ENCODE measurements at regions of chr12 and their contacts with region 1.

Region 1: GRCh38 chr12:57904848-57905811 is 36.2 kb upstream of the ATP23 start:
- DNase-seq: peak; percentile 96
- H3K4me3 ChIP-seq: peak overlapping the region; percentile 12 to 37 (median 31)
- H3K27ac ChIP-seq: peak overlapping the region in 1 of 4 donors; percentile 38
- H3K4me1 ChIP-seq: peaks cover 5 to 9% (median 6%) of the 10 kb centered on the region in 4 donors
- H3K27me3 ChIP-seq: peaks cover 0 to 4% (median 0%) of the 10 kb centered on the region in 4 donors
- CTCF ChIP-seq: peak; percentile 100
- EP300 ChIP-seq: no peak
- POLR2A ChIP-seq: no peak

Region 2: GRCh38 chr12:57554897-57555296 is 350.2 kb before region 1 on chr12:
- intact Hi-C with region 1: no loop called
- DNase-seq: no peak
- H3K4me3 ChIP-seq: no peak overlapping the region
- H3K27ac ChIP-seq: no peak overlapping the region
- H3K4me1 ChIP-seq: peaks cover 4 to 9% (median 8%) of the 10 kb centered on the region in 4 donors
- H3K27me3 ChIP-seq: peaks cover 0 to 10% (median 2%) of the 10 kb centered on the region in 4 donors
- CTCF ChIP-seq: no peak
- EP300 ChIP-seq: no peak
- POLR2A ChIP-seq: no peak

Region 3: GRCh38 chr12:57782608-57783465 is 122.3 kb before region 1 on chr12 and contains the start of gene TSFM:
- intact Hi-C with region 1: loop called (anchors 1 kb)
- DNase-seq: peak; percentile 98
- H3K4me3 ChIP-seq: peak within 1 kb of the TSS; percentile 66 to 99 (median 92)
- H3K27ac ChIP-seq: peak within 1 kb of the TSS; percentile 74 to 82 (median 76)
- H3K4me1 ChIP-seq: peaks cover 14 to 29% (median 20%) of the 10 kb centered on the region in 4 donors
- H3K27me3 ChIP-seq: no peaks in the 10 kb centered on the region
- CTCF ChIP-seq: peak; percentile 98 to 99 (median 98)
- EP300 ChIP-seq: no peak
- POLR2A ChIP-seq: peak; percentile 42
- total RNA-seq, gene TSFM: 17.6 to 38.4 (median 29.2) TPM

Region 4: GRCh38 chr12:57803319-57803893 is 101.7 kb before region 1 on chr12:
- intact Hi-C with region 1: loop called (anchors 2 kb)
- DNase-seq: no peak
- H3K4me3 ChIP-seq: no peak overlapping the region
- H3K27ac ChIP-seq: peak overlapping the region in 3 of 4 donors; percentile 22 to 50 (median 43)
- H3K4me1 ChIP-seq: peaks cover 4 to 10% (median 5%) of the 10 kb centered on the region in 4 donors
- H3K27me3 ChIP-seq: no peaks in the 10 kb centered on the region
- CTCF ChIP-seq: peak; percentile 75 to 89 (median 86)
- EP300 ChIP-seq: no peak
- POLR2A ChIP-seq: no peak

Region 5: DNA sequence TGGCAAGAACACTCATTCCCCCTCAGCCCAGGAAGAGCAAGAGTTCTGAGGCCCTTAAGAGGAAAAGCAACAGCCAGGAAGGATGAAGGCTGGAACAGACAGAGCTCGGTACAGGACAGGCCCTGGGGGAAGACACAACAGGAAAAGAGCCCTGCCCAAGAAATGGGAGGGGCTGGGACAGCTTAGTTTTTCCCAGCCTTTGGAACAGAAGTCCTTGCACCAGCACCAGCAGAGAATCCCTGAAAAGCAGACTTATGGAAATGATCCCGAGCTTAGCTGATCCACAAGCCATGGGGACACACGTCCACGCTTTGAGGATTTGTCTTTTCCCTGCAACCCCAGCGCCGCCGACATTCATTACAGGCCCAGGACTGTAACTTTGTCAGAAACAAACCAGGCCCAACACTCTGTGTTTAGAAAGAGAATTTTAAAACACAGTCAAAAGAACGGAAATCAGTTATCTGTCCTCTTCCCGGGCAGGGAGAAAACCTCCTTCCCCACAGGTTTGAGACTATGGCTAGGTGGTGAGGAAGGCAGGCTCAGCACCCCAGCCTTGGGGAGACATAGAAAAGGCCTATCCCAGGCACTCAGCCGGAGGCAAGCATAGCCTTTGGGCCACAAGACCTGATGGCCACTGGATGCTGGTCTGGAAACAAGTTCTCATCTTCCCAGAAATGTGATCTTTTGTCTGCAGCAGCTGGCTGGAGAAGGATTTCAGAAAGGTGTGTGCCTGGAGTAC is 82.6 kb before region 1 on chr12:
- intact Hi-C with region 1: no loop called
- DNase-seq: no peak
- H3K4me3 ChIP-seq: no peak overlapping the region
- H3K27ac ChIP-seq: peak overlapping the region in 3 of 4 donors; percentile 18 to 54 (median 28)
- H3K4me1 ChIP-seq: peaks cover 39 to 85% (median 69%) of the 10 kb centered on the region in 4 donors
- H3K27me3 ChIP-seq: no peaks in the 10 kb centered on the region
- CTCF ChIP-seq: no peak
- EP300 ChIP-seq: no peak
- POLR2A ChIP-seq: no peak

Region 6: DNA sequence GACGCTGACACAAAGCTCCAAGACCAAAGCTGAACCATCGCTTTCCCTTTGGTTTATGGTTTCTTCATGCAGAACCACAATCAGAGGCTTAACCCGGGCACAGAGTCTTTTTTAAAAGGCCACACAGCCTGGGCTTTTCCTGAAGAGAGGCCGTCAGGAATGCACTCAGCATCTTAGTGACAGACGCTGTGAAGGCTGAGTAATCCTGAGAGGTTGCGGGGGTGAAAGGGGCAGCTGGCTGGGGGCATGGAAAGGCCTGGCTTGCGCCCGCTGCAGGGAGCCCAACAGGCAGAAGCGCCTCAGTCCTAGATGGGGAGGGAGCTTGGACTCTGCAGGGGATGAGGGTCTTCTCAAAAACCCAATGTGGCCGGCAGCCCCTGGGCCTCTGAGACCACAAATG is 72.2 kb before region 1 on chr12:
- intact Hi-C with region 1: loop called (anchors 2 kb)
- DNase-seq: no peak
- H3K4me3 ChIP-seq: peak overlapping the region; percentile 7 to 26 (median 18)
- H3K27ac ChIP-seq: peak overlapping the region; percentile 15 to 100 (median 70)
- H3K4me1 ChIP-seq: peaks cover 92 to 100% (median 97%) of the 10 kb centered on the region in 4 donors
- H3K27me3 ChIP-seq: no peaks in the 10 kb centered on the region
- CTCF ChIP-seq: no peak
- EP300 ChIP-seq: no peak
- POLR2A ChIP-seq: no peak

Region 7: DNA sequence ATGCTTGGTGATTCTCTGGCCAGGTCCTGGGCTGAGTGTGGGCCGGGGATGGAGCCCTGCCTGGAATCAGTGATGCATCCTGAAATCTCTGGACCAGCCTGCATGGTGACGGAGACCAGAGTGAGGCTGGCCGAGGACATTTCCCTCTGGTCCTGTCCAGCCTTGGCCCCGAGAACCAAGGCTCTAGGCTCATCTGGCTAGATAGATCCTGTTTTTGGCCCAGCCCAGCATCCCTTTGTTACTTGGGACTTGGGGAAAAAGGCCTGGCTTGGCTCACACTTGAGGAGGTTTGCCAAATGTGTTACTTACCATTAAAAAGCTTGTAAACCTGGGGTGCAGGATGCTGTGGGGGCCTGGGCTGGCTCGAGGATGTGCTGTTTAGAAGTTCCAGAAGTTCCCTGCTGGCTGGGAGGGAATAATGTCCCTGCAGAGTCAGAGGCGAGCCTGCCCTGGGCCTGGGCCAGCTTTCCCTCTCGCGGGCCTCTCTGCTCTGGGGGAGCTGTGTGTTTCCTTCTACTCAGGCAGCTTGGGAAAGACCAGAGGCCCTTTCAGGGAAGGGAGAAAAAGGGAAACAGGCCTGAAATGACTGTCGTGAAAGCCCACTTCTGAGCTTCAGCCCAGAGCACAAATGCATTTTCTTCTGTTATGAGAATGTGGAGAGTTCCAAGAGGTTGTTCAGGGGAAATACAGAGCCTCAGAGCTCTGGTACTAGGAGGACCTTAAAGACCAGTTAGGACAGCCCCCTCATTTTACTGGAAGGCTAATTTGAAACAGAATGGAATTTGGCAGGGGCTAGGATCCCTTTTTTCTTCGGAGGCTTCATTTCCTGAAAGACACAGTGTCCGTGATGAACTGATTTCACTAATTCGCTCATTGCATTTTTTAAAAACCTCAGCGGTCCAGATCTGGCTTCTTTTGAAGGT is 11.4 kb before region 1 on chr12:
- intact Hi-C with region 1: no loop called
- DNase-seq: peak; percentile 96
- H3K4me3 ChIP-seq: peak overlapping the region; percentile 11 to 27 (median 18)
- H3K27ac ChIP-seq: peak overlapping the region; percentile 93 to 99 (median 96)
- H3K4me1 ChIP-seq: peaks cover 92 to 98% (median 97%) of the 10 kb centered on the region in 4 donors
- H3K27me3 ChIP-seq: no peaks in the 10 kb centered on the region
- CTCF ChIP-seq: peak in 1 of 3 experiments; percentile 15
- EP300 ChIP-seq: peak; percentile 57
- POLR2A ChIP-seq: no peak

Region 8: DNA sequence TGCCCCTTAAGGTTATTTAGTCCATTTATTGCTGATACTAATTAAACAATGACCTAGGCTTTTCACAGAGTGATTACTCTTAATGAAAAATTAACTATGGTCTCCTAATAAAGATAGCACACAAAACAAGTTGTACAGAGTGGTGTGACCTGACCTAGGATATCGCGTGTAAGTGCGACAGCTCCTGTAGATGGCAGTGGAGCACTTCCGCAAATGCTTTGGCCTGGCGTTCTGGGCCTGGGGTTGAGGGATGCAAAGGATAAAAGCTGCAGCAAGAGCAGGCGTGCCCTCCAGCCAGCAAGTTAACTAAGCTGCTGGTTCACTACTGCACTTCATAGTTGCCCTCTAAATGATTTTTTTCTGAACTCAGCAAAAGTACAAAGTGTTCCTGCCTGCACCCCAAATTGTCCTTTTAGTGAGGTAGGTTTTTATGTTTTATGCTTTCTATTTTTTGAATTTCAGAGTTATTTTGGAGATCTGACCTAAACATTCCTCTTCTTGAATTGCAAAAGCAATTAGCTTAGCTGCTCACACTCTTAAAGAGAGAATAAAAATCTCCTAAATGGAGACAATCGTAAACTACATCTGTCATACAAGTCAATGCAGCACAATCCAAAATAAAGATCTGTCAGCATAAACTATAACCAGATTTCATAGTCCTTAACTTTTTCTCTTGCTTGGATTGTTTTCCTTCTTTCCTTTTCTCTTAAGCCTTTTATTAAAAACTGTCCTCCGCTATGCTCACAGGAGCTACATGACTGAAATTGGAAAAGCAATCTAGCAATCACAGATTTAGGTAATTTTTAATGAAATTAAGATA is 635.6 kb after region 1 on chr12:
- intact Hi-C with region 1: no loop called
- DNase-seq: no peak
- H3K4me3 ChIP-seq: no peak overlapping the region
- H3K27ac ChIP-seq: peak overlapping the region in 2 of 4 donors; percentile 15 to 44
- H3K4me1 ChIP-seq: peaks cover 0 to 32% (median 22%) of the 10 kb centered on the region in 4 donors
- H3K27me3 ChIP-seq: no peaks in the 10 kb centered on the region
- CTCF ChIP-seq: peak; percentile 75 to 80 (median 79)
- EP300 ChIP-seq: no peak
- POLR2A ChIP-seq: no peak